T-cell (primary cell): ENCODE measurements at regions of chr12 and their contacts with region 1.

Region 1: GRCh38 chr12:32083489-32083888 is 23.2 kb upstream of the BICD1 start:
- DNase-seq: no peak
- ATAC-seq: no peak
- H3K4me3 ChIP-seq: no peak overlapping the region
- H3K4me3 Mint-ChIP-seq: no peak overlapping the region
- H3K27ac ChIP-seq: no peak overlapping the region
- H3K27ac Mint-ChIP-seq: no peak overlapping the region
- H3K4me1 ChIP-seq: no peaks in the 10 kb centered on the region
- H3K4me1 Mint-ChIP-seq: no peaks in the 10 kb centered on the region
- H3K27me3 ChIP-seq: no peaks in the 10 kb centered on the region
- H3K27me3 Mint-ChIP-seq: no peaks in the 10 kb centered on the region

Region 2: DNA sequence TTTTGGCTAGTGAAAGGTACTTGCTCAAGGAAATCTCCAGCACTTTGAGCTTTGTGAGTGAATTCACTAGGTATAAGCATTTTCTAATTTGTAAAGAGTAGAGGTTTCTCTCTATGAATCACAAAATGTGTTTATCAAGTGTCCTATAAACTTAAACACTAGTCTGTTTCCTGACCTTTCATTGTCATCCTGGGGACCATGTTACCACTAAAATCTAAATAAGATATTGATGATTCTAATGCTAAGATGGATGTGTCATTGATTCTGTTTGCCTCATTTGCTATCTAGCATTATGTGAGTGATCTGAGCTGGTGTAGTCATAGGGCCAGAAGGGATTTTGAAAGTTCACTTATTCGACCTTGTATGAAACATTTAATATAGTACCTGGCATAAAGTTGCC is 515.2 kb after region 1 on chr12:
- CTCF ChIA-PET with region 1: no interaction called
- POLR2A ChIA-PET with region 1: interaction called in 1 of 2 experiments, 10 read pairs
- DNase-seq: no peak
- ATAC-seq: no peak
- H3K4me3 ChIP-seq: no peak overlapping the region
- H3K4me3 Mint-ChIP-seq: no peak overlapping the region
- H3K27ac ChIP-seq: no peak overlapping the region
- H3K27ac Mint-ChIP-seq: no peak overlapping the region
- H3K4me1 ChIP-seq: no peaks in the 10 kb centered on the region
- H3K4me1 Mint-ChIP-seq: no peaks in the 10 kb centered on the region
- H3K27me3 ChIP-seq: no peaks in the 10 kb centered on the region
- H3K27me3 Mint-ChIP-seq: no peaks in the 10 kb centered on the region